Transverse colon (tissue), 4 donors: ENCODE measurements at regions of chr13 and their contacts with region 1.

Region 1: GRCh38 chr13:110593430-110594130 is 21.8 kb upstream of the NAXD start:
- DNase-seq: no peak
- H3K4me3 ChIP-seq: no peak overlapping the region
- H3K27ac ChIP-seq: no peak overlapping the region
- H3K4me1 ChIP-seq: no peaks in the 10 kb centered on the region
- H3K27me3 ChIP-seq: no peaks in the 10 kb centered on the region
- CTCF ChIP-seq: peak; percentile 54 to 75 (median 63)
- EP300 ChIP-seq: no peak
- POLR2A ChIP-seq: no peak

Region 2: DNA sequence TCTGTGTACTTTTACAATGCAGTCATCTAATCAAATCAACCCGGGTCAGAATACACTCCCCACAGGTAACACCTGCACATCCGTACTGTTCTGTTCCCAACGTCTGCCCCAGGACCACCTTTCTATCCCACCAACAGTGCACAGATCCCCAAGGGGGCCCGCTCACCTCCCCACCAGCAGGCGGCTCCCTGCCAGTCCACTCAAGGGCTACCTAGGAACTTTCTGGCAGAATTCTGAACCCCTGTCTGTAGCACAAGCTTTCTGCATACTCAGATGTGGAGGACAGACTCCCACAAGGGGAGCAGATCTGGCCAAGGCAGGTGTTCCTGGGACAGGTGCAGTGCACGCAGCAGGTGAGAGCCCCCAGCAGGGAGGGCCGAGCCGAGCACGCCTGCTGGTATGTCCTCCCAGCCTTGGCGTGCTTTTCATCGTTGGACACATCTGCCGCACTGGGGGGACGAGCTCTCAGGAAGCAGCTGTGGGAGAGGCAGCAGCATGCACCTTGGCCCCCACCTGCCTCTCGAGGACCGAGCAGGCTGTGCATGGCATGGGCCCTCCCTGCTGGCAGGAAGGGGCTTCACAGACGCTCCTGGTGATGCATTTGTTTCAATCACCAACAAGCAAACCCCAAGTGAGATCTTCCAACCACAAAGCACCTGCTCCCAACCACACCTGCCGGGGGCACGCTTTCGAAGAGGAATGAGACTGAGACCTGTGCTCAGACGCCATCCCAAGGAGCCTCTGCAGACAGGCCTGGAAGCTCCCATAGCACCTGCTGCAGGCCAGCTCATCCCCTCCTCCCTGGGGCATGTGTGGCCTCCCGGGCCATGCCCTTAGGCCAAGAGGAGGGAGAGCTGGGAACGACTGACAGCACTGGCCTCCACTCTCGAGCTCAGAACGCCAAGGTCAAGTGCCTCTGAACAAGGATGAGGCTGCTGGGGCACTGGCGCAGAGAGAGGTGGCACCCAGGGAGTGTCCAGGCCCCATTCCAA is 68.0 kb before region 1 on chr13:
- in situ Hi-C with region 1: no loop called
- intact Hi-C with region 1: no loop called
- DNase-seq: peak; percentile 46
- H3K4me3 ChIP-seq: no peak overlapping the region
- H3K27ac ChIP-seq: peak overlapping the region; percentile 77 to 88 (median 84)
- H3K4me1 ChIP-seq: peaks cover 42 to 72% (median 64%) of the 10 kb centered on the region in 4 donors
- H3K27me3 ChIP-seq: no peaks in the 10 kb centered on the region
- CTCF ChIP-seq: peak in 2 of 5 experiments; percentile 29 to 36
- EP300 ChIP-seq: no peak
- POLR2A ChIP-seq: no peak

Region 3: DNA sequence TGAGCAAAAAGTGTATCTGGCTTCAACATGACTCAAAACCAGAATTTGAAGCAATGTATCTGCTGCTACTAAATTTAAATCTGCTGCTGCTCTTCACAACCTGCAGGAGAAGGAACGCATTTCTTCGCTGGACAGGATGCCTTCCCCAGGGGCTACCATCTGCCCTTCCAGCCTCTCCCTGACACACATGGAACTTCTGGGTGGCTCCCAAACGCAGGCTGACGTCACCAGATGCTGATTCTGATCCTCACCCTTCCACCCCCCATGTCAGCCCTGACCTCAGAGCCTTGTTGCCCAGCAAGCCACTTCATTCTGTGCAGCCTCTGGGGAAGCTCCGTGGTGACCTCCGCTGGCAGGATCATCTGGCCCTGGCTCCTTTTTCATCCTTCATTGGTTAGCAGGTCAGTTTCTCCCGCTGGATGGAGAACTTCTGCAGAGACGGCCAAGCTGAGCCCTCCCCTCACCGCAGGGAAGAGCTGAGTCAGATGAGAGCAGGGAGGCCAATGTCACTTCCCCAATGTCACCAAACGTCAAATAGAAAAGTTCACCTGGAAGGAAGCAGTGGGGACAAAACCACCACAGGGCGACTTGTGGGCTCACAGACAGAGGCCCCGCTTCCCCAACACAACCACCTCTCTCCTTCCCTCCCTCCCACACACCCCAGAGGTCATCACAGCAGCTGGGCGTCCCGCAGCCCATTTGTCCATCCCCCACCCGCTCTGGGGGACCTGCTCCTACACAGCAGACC is 18.1 kb before region 1 on chr13:
- in situ Hi-C with region 1: no loop called
- intact Hi-C with region 1: no loop called
- DNase-seq: no peak
- H3K4me3 ChIP-seq: no peak overlapping the region
- H3K27ac ChIP-seq: no peak overlapping the region
- H3K4me1 ChIP-seq: peaks cover 0 to 10% (median 2%) of the 10 kb centered on the region in 4 donors
- H3K27me3 ChIP-seq: no peaks in the 10 kb centered on the region
- CTCF ChIP-seq: no peak
- EP300 ChIP-seq: no peak
- POLR2A ChIP-seq: no peak

Region 4: GRCh38 chr13:110799246-110800236 is 206.0 kb after region 1 on chr13:
- in situ Hi-C with region 1: loop called in 3 of 4 experiments (anchors 10 to 25 kb)
- intact Hi-C with region 1: no loop called
- DNase-seq: no peak
- H3K4me3 ChIP-seq: peak overlapping the region in 2 of 4 donors; percentile 1 to 3
- H3K27ac ChIP-seq: peak overlapping the region; percentile 32 to 50 (median 45)
- H3K4me1 ChIP-seq: no peaks in the 10 kb centered on the region
- H3K27me3 ChIP-seq: no peaks in the 10 kb centered on the region
- CTCF ChIP-seq: no peak
- EP300 ChIP-seq: no peak
- POLR2A ChIP-seq: no peak

Region 5: GRCh38 chr13:110819203-110820014 is 225.8 kb after region 1 on chr13:
- in situ Hi-C with region 1: loop called in 2 of 4 experiments (anchors 10 to 25 kb)
- intact Hi-C with region 1: no loop called
- DNase-seq: peak; percentile 84
- H3K4me3 ChIP-seq: no peak overlapping the region
- H3K27ac ChIP-seq: no peak overlapping the region
- H3K4me1 ChIP-seq: no peaks in the 10 kb centered on the region
- H3K27me3 ChIP-seq: no peaks in the 10 kb centered on the region
- CTCF ChIP-seq: peak; percentile 93 to 98 (median 98)
- EP300 ChIP-seq: no peak
- POLR2A ChIP-seq: no peak

Region 6: GRCh38 chr13:111046590-111047141 is 453.1 kb after region 1 on chr13:
- in situ Hi-C with region 1: loop called in 1 of 4 experiments (anchors 25 kb)
- intact Hi-C with region 1: no loop called
- DNase-seq: no peak
- H3K4me3 ChIP-seq: no peak overlapping the region
- H3K27ac ChIP-seq: peak overlapping the region in 1 of 4 donors; percentile 28
- H3K4me1 ChIP-seq: peaks cover 0 to 3% (median 2%) of the 10 kb centered on the region in 4 donors
- H3K27me3 ChIP-seq: no peaks in the 10 kb centered on the region
- CTCF ChIP-seq: peak in 3 of 5 experiments; percentile 15 to 19 (median 17)
- EP300 ChIP-seq: no peak
- POLR2A ChIP-seq: no peak